Dendritic cell treated with granulocyte-macrophage colony-stimulating factor and Interleukin-4, amounts not matched to agents 40 ng/mL and 50 ng/mL, for 4 days (primary cell): ENCODE measurements at regions of chr12 and their contacts with region 1.

Region 1: GRCh38 chr12:104215638-104216297 is at the start of gene TXNRD1:
- H3K4me3 Mint-ChIP-seq: peak within 1 kb of the TSS; percentile 81
- H3K27ac Mint-ChIP-seq: peak within 1 kb of the TSS; percentile 77
- H3K4me1 Mint-ChIP-seq: peaks cover 17% of the 10 kb centered on the region
- H3K27me3 Mint-ChIP-seq: peaks cover 13% of the 10 kb centered on the region

Region 2: DNA sequence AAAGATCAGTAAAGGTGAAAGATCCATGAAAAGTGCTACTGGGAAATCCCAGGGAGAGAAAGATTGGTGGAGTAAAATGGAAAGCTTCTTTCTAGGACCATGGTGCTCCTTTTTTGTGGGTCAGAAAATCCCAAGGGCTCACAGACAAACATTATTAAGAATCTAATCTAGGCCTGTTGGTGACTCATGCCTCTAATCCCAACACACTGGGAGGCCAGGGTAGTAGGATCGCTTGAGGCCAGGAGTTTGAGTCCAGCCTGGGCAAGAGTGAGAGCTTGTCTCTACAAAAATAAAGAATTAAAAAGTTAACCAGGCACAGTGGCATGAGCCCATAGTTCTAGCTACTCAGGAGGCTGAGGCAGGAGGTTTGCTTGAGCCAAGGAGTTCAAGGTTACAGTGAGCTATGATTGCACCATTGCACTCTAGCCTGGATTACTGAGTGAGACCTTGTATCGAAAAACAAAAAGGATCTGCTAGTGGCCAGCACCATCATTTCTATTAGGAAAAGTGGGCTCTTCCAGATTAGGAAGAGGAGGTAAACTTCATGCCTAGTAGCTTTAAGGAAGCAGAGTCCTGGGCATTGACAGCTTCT is 42.8 kb after region 1 on chr12:
- intact Hi-C with region 1: loop called (anchors 5 kb)
- H3K4me3 Mint-ChIP-seq: no peak overlapping the region
- H3K27ac Mint-ChIP-seq: no peak overlapping the region
- H3K4me1 Mint-ChIP-seq: peaks cover 13% of the 10 kb centered on the region
- H3K27me3 Mint-ChIP-seq: no peaks in the 10 kb centered on the region

Region 3: GRCh38 chr12:104303538-104304151 is 87.9 kb after region 1 on chr12 and contains the start of gene EID3:
- intact Hi-C with region 1: loop called (anchors 5 kb)
- H3K4me3 Mint-ChIP-seq: peak within 1 kb of the TSS; percentile 94
- H3K27ac Mint-ChIP-seq: peak within 1 kb of the TSS; percentile 84
- H3K4me1 Mint-ChIP-seq: peaks cover 66% of the 10 kb centered on the region
- H3K27me3 Mint-ChIP-seq: no peaks in the 10 kb centered on the region

Region 4: GRCh38 chr12:104358347-104359003 is 142.7 kb after region 1 on chr12:
- intact Hi-C with region 1: loop called (anchors 5 kb)
- H3K4me3 Mint-ChIP-seq: no peak overlapping the region
- H3K27ac Mint-ChIP-seq: no peak overlapping the region
- H3K4me1 Mint-ChIP-seq: no peaks in the 10 kb centered on the region
- H3K27me3 Mint-ChIP-seq: no peaks in the 10 kb centered on the region

Region 5: DNA sequence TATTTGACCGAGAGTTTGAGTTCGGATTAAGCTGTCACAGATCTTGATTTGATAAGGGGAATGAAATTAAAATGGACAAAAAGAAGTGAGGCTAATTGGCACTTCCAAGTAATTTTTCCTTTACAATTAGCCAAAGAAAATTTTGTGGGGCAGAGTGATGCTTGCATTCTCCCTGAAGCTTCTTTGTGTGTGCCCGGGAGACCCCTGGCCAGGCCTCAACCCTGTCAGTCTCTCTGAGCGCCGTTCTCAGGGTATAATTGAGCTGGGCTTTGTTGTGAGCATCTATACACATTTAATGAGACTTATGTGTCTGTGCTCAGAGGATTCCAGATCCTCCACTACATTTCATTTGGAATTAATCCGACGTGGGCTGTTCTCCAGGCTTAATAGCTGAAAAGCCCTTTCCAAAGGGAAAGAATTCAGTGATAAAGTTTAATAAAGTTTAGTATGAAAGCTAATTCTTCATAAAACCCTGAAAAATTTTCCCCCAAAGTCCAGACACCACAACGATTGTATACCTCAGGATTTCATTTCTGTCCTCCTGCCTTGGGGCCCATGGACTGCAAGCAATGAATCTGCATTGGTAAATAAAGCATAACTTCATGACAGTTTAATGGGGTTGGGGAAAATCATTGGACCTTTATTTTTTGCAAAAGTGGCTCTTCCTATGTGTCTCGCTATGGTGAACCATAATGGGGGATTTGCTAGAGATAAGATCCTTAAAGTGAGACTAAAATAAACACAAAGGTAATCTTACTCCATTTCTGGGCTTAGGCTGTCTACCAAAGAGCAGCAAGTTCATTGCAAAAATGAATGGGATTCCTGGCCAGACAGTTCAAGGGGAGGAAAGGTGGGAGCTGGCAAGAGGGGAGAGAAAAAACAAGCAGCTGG is 1407.3 kb after region 1 on chr12:
- intact Hi-C with region 1: no loop called
- H3K4me3 Mint-ChIP-seq: no peak overlapping the region
- H3K27ac Mint-ChIP-seq: no peak overlapping the region
- H3K4me1 Mint-ChIP-seq: no peaks in the 10 kb centered on the region
- H3K27me3 Mint-ChIP-seq: no peaks in the 10 kb centered on the region